Astrocyte of the cerebellum (primary cell): ENCODE measurements at regions of chr12 and their contacts with region 1.

Region 1: GRCh38 chr12:14417715-14418114 is 52.2 kb downstream of the ATF7IP start:
- DNase-seq: peak; percentile 83
- H3K4me3 ChIP-seq: no peak overlapping the region
- CTCF ChIP-seq: no peak

Region 2: DNA sequence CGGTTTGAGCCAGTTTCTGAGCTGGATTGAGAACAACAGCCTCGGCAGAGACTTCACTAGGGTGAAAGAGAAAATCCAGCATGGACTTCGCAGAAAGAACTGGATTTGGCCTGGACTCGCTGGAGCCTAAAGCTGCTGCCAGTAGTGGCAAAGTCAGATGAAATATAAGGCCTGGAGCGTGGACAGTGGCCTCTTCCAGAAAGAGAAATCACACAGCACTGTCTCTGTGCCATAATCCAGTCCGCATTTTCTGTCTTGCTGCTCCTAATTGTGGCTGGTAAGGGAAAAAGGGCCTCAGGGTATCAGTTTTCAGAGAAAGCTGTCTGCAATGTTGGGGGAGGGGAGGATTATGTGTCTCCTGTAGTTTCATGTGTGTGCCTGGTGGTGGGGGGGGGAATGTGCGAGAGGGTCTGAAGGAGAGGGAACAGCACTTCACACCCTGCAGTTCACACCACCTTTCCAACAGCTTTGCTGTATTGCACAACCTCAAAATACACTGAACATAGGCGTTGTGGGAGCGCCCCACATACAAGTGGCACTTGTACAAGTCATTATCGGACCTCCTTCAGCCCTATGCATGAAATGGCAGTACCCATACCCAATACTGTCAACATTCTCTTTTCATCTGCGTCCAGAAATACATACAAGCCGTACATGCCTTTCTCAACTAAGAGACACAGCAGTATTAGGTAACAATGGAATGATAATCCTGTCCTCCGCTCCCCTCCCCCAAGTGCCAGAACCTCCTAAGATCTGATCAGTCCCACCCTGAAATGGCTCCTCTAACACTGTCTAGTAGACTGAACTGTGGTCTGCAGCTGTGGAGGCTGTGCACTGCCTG is 159.8 kb before region 1 on chr12:
- in situ Hi-C with region 1: loop called (anchors 5 kb)
- DNase-seq: peak; percentile 95
- H3K4me3 ChIP-seq: no peak overlapping the region
- CTCF ChIP-seq: no peak

Region 3: DNA sequence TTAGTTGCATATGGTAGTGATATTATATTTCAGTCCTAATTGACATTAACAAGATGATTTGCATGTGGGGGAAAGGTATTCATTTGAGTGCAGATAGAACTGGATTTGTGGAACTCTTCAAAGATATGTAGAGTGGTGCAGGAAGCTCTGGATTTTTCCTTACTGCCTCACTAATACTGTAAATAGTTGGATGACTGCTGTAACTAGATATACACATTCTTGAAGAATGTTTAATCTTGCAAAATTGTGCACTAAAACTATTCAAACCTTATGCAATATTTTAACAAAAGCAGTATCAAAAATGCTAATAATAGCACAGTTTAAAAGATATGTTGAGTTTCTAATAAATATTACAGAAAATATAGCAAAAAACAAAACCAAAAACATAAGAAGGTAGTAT is 95.3 kb before region 1 on chr12:
- in situ Hi-C with region 1: no loop called
- DNase-seq: no peak
- H3K4me3 ChIP-seq: no peak overlapping the region
- CTCF ChIP-seq: no peak